ENCODE measurements at regions of chr4 and their contacts with region 1.

Region 1: DNA sequence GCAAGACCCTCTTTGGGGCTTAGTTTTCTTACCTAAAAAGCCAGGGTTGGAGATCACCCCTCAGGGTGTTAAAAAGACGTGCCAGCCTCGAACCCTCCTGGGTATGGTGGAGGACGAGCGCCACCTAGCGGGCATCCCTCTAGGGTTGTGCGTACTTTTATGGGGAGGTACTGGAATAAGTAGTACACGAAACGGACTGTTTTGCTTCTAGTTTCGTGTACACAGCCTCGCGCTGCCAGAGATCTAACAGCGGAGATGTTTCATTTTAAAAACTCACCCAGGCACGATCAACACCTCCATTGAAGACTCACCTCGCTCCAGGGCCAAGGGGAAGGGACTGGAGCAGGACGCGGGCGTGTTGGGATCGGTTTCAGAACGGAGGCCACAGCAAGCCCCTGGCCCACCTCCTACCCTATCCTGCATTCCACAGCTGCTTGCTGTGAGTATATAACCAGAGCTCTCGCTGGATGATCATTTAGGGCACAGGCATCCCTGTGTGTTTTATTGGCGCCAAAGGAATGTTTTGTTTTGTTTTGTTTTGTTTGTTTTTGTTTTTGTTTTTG is 4.8 kb upstream of the NKX3-2 start:
- DNase-seq: peak; percentile 80 to 85
- H3K4me3 ChIP-seq: peak overlapping the region in 1 of 2 donors; percentile 26
- H3K27ac ChIP-seq: no peak overlapping the region
- H3K4me1 ChIP-seq: peaks cover 0 to 39% (median 28%) of the 10 kb centered on the region in 4 donors
- H3K27me3 ChIP-seq: peaks cover 0 to 64% of the 10 kb centered on the region in 2 donors
- CTCF ChIP-seq: peak; percentile 81 to 82

Region 2: DNA sequence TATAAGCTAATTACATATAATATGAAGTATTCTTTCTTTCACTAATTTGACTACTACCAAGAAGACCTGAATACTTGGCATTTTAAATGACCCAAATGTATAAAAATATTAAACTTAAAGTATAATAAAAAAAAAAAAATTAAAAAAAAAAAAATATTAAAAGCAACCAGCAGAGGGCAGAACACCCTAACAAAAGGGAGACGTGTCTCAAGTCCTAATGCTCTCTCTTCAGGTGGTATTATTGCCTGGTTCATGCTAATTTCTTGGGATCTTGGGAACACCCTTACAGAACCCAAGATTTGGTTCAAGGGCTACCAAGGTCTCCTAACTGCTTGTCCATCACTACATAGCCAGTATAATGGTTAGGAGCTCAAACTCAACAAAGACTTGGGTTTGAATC is 819.7 kb before region 1 on chr4:
- intact Hi-C with region 1: loop called (anchors 10 kb)
- DNase-seq: no peak
- H3K4me3 ChIP-seq: no peak overlapping the region
- H3K27ac ChIP-seq: no peak overlapping the region
- H3K4me1 ChIP-seq: no peaks in the 10 kb centered on the region
- H3K27me3 ChIP-seq: no peaks in the 10 kb centered on the region
- CTCF ChIP-seq: peak in 1 of 2 experiments; percentile 26

Region 3: DNA sequence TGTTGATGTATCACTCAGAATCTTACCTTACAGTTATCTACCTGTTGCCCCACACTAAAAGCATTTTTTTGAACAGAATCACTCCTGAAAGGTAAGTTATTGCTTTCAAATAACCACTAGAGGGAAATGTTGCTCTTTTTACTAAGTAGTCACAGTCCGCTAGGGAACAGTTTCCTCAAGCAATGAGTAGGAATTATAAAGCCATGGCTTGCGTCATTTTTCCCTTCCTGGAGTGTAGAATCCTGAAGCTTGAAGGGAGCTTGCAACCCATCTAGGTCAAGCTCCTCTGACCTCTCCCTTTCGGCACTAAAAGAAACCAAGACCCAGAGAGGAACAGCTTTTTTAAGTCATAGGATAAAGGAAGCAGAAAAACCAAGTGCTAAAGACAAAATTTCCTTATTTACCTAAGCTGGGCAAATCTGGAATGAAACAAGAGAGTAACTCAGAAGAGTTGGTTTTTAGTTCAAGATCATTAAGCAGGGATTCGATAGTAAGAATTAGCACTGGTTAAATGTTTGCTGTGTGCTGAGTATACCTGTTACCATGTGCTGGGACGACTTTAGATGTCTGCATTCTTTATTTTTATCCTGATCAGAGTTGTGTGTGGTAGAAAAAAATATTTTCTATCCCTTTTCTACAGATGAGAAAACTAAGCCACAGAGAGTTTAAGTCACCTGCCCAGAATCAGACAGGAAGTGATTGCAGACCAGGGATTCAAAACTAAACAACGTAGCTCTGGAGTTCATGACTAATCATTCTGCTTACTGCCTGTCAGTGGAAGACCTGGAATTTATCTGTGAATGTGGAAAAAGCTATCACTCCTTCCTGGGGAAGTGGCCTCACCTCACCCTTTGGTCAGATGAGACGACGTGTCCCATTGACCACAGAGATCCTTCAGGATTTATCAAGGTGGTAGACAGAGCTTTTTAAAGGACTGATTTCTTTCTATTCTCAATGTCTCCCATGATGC is 696.4 kb before region 1 on chr4:
- intact Hi-C with region 1: loop called (anchors 2 kb)
- DNase-seq: no peak
- H3K4me3 ChIP-seq: no peak overlapping the region
- H3K27ac ChIP-seq: no peak overlapping the region
- H3K4me1 ChIP-seq: no peaks in the 10 kb centered on the region
- H3K27me3 ChIP-seq: peaks cover 0 to 8% of the 10 kb centered on the region in 2 donors
- CTCF ChIP-seq: peak; percentile 55 to 66

Measured in tibial artery (tissue), 4 donors.